Pancreas (tissue), 10 donors: ENCODE measurements at regions of chr14 and their contacts with region 1.

Region 1: DNA sequence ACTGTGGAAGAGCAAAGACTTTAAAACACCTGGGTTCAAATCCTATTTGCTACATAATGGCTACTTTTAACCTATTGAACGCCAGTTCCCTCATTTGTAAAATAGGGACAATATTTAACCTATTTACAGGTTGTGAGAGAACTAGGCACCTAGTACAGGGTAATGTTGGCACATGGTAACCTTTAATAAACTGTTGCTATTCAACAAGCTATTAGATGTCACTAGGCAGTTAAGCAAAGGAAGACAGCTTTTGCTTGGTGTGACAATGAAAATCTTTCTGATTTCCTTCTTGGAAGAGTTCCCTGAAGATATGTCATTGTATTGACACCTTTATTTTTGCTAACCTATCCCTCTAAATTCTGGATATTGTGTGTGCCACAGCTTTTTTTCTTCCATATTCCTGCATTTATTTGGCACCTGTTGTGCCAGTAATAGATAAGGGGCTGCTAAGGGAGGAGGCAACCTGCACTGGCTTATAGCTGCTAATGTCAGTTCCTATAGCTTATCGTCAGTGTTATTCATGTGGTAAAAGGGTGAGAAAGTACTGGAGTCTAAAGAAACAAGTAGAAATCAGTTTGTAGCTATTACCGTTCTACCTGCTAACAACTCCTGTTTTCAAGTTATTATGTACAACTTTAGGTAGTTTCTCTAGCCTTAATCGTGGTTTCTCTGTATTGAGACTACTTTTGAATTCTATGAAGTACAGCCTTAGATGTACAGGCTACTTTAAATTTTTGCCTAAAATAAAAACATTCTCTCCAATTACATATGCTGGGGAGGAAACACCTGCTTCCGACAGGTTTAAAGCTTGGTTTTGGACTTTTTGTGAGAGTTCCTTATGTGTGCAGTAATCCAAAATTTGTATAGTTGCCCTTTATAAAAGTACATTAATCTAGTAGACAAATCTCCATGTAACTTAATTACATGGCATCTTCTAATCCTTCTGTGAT is 24.3 kb downstream of the HIF1A start:
- DNase-seq: no peak
- ATAC-seq: peak in 2 of 4 donors; percentile 31 to 45
- H3K4me3 ChIP-seq: no peak overlapping the region
- H3K27ac ChIP-seq: no peak overlapping the region
- H3K4me1 ChIP-seq: peaks cover 0 to 24% (median 16%) of the 10 kb centered on the region in 3 donors
- H3K27me3 ChIP-seq: no peaks in the 10 kb centered on the region
- CTCF ChIP-seq: no peak

Region 2: DNA sequence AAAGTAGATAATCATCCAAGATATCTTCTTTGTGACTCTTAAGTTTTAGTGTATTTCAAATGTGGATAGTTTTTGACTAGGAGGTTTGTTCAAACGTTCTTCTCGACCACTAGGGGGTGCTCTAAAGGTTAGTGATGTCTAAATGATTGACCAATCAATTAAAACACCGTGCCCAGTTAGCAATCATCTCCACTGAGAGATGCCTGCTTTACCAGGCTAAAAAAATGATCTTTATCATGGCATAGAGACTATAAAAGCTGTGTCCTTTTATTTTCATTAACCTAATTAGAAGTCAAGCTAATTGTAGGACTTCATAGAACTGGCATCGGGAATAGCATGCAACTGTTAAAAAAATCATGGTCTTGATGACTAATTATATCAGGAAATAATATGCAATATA is 244.3 kb before region 1 on chr14:
- intact Hi-C with region 1: loop called in 1 of 3 experiments (anchors 10 kb)
- DNase-seq: no peak
- ATAC-seq: peak; percentile 26 to 65 (median 52)
- H3K4me3 ChIP-seq: no peak overlapping the region
- H3K27ac ChIP-seq: peak overlapping the region in 2 of 4 donors; percentile 76 to 84
- H3K4me1 ChIP-seq: peaks cover 4 to 50% (median 20%) of the 10 kb centered on the region in 3 donors
- H3K27me3 ChIP-seq: no peaks in the 10 kb centered on the region
- CTCF ChIP-seq: peak; percentile 44 to 79 (median 60)